ENCODE measurements at regions of chr22 and their contacts with region 1.

Region 1: DNA sequence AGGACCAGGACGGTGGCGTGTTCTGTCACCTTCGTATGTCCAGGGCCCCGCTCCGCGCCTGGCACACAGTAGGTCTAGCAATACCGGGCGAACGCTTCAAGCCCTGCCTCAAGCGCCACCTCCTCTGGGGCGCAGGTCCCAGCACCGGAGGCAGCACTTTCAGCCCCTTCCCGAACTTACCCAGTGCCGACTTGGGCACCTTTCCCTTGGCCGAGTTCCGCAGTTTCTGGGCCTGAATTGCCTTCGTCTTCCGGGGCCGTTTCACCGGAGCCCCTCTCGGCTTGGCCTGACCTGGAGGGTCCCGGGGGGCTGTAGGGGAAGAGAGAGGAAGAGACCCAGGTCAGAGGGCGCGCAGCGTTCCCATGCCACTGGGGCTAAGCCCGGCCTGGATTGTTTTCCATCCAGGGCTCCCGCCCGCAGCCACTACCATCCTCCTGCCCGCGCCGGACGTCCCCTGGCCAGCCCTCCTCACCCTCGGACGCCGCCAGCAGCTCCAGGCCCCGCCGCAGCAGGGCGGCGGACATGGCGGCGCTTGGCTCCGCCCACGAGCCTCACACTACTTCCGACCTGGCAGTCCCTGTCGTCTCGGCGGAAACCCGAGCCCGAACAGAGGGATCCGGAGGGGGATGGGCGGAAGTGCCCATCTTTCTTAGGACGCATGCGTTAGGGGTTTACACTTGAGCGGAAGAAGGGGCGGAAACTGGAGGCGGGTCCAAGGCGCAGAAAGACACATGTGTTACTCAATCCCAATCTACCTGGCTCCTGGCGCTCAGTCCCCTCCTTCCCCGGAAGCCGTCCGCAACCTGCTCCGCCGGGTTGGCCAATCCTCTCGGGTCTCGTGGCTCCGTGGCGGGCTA is at the start of gene RPS19BP1:
- DNase-seq: peak; percentile 98 to 100 (median 99)
- ATAC-seq: peak; percentile 85
- H3K4me3 ChIP-seq: peak within 1 kb of the TSS; percentile 73
- H3K4me3 Mint-ChIP-seq: peak within 1 kb of the TSS; percentile 98
- H3K27ac ChIP-seq: peak within 1 kb of the TSS; percentile 74 to 91
- H3K27ac Mint-ChIP-seq: peak within 1 kb of the TSS; percentile 90
- H3K4me1 ChIP-seq: peaks cover 67% of the 10 kb centered on the region
- H3K4me1 Mint-ChIP-seq: peaks cover 64% of the 10 kb centered on the region
- H3K27me3 ChIP-seq: no peaks in the 10 kb centered on the region
- H3K27me3 Mint-ChIP-seq: no peaks in the 10 kb centered on the region
- CTCF ChIP-seq: no peak
- total RNA-seq, gene RPS19BP1: 65.8 to 69.7 TPM

Region 2: DNA sequence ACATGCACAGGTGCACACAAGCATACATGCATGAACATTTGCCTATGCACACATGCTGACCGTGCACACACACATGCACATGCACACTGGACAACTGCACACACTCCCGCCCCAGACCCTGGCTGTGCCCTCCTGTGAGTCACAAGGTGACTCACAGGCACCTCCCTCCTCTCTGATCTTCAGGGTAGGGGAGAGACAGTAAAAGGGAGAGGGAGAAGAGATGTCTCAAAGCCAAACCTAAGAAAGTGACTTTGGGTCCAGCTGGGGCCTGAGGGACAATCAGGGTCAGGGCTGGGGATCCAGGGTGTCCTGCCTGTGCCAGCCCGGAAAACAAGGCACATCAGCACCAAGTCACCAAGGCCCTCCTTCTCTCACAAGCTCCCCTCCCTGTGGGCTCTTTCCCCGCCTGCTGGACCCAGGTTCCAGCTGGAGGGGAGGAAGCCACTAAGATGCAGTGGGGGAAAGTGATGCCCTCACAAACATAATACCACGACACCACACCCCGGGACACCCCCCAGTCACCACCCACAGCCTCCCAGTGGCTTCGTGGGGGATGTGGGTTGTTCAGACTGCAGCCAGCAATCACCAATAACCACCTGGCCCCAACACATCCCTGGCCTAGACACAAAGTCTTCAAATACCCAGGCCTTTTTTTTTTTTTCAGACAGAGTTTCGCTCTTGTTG is 327.0 kb before region 1 on chr22:
- CTCF ChIA-PET with region 1: no interaction called
- POLR2A ChIA-PET with region 1: no interaction called
- intact Hi-C with region 1: no loop called
- DNase-seq: peak in 10 of 14 experiments; percentile 11 to 85 (median 38)
- ATAC-seq: peak; percentile 76
- H3K4me3 ChIP-seq: no peak overlapping the region
- H3K4me3 Mint-ChIP-seq: no peak overlapping the region
- H3K27ac ChIP-seq: no peak overlapping the region
- H3K27ac Mint-ChIP-seq: peak overlapping the region; percentile 73
- H3K4me1 ChIP-seq: peaks cover 26% of the 10 kb centered on the region
- H3K4me1 Mint-ChIP-seq: peaks cover 24% of the 10 kb centered on the region
- H3K27me3 ChIP-seq: no peaks in the 10 kb centered on the region
- H3K27me3 Mint-ChIP-seq: no peaks in the 10 kb centered on the region
- CTCF ChIP-seq: no peak

Region 3: DNA sequence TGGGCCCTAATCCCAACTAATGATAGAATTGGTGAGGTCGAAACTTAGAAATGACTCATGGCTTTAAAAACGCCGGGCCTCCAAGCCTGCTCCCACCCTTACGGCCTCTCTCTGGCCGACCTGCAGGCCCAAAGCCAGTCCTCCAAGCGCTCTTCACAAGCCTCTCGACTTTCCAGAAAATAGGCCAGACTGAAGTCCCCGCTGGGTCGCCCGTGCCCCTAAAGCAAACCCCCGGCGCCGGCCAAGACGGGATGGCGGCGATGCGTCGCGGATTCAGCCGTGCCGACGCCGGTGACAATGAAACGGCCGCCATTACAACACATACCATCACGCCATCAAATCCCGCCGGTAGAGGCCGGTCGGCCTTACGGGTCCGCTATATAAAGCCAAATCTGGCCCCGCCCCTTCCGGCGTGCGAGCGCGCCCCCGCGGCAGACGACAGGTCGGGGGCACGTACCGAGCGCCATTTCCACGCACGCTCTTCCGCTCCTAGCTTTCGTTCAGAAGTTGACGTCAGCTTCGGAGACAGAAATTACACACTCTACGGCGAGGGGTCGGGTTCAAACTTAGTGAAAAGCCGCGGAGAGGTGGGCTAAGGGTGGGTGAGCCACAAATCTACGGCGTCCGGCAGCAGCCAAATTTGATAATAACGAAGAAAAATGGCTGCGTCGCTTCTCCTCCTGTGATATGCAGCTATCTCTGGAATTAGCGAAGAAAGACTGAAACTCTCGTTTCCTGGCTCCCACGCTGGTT is 213.0 kb before region 1 on chr22 and contains the start of gene RPL3:
- CTCF ChIA-PET with region 1: interaction called, 6 read pairs
- POLR2A ChIA-PET with region 1: interaction called, 45 read pairs
- intact Hi-C with region 1: loop called in 1 of 2 experiments (anchors 1 kb)
- DNase-seq: peak; percentile 96 to 99 (median 98)
- ATAC-seq: peak; percentile 76
- H3K4me3 ChIP-seq: peak within 1 kb of the TSS; percentile 90
- H3K4me3 Mint-ChIP-seq: peak within 1 kb of the TSS; percentile 99
- H3K27ac ChIP-seq: peak within 1 kb of the TSS; percentile 88 to 92
- H3K27ac Mint-ChIP-seq: peak within 1 kb of the TSS; percentile 96
- H3K4me1 ChIP-seq: peaks cover 57% of the 10 kb centered on the region
- H3K4me1 Mint-ChIP-seq: peaks cover 41% of the 10 kb centered on the region
- H3K27me3 ChIP-seq: no peaks in the 10 kb centered on the region
- H3K27me3 Mint-ChIP-seq: no peaks in the 10 kb centered on the region
- CTCF ChIP-seq: no peak
- total RNA-seq, gene RPL3: 3,952 to 3,974 TPM

Region 4: GRCh38 chr22:39490135-39490798 is 42.2 kb before region 1 on chr22:
- CTCF ChIA-PET with region 1: interaction called, 22 read pairs
- POLR2A ChIA-PET with region 1: interaction called, 10 read pairs
- intact Hi-C with region 1: loop called (anchors 1 kb)
- DNase-seq: peak; percentile 52 to 91 (median 76)
- ATAC-seq: peak; percentile 100
- H3K4me3 ChIP-seq: no peak overlapping the region
- H3K4me3 Mint-ChIP-seq: no peak overlapping the region
- H3K27ac ChIP-seq: no peak overlapping the region
- H3K27ac Mint-ChIP-seq: no peak overlapping the region
- H3K4me1 ChIP-seq: peaks cover 18% of the 10 kb centered on the region
- H3K4me1 Mint-ChIP-seq: peaks cover 12% of the 10 kb centered on the region
- H3K27me3 ChIP-seq: no peaks in the 10 kb centered on the region
- H3K27me3 Mint-ChIP-seq: no peaks in the 10 kb centered on the region
- CTCF ChIP-seq: no peak

Region 5: GRCh38 chr22:39520054-39520891 is 12.2 kb before region 1 on chr22 and contains the start of gene ATF4:
- CTCF ChIA-PET with region 1: interaction called, 69 read pairs
- POLR2A ChIA-PET with region 1: interaction called, 129 read pairs
- intact Hi-C with region 1: loop called (anchors 1 kb)
- DNase-seq: peak; percentile 93 to 99 (median 94)
- ATAC-seq: peak; percentile 91
- H3K4me3 ChIP-seq: peak within 1 kb of the TSS; percentile 100
- H3K4me3 Mint-ChIP-seq: peak within 1 kb of the TSS; percentile 97
- H3K27ac ChIP-seq: peak within 1 kb of the TSS; percentile 92 to 95
- H3K27ac Mint-ChIP-seq: peak within 1 kb of the TSS; percentile 98
- H3K4me1 ChIP-seq: peaks cover 52% of the 10 kb centered on the region
- H3K4me1 Mint-ChIP-seq: peaks cover 57% of the 10 kb centered on the region
- H3K27me3 ChIP-seq: no peaks in the 10 kb centered on the region
- H3K27me3 Mint-ChIP-seq: peaks cover 5% of the 10 kb centered on the region
- CTCF ChIP-seq: no peak
- total RNA-seq, gene ATF4: 358 to 365 TPM

Region 6: GRCh38 chr22:40024201-40025061 is 492.0 kb after region 1 on chr22:
- CTCF ChIA-PET with region 1: interaction called, 43 read pairs
- POLR2A ChIA-PET with region 1: interaction called, 10 read pairs
- intact Hi-C with region 1: loop called (anchors 1 to 2 kb)
- DNase-seq: peak; percentile 40 to 80 (median 53)
- ATAC-seq: peak; percentile 82
- H3K4me3 ChIP-seq: no peak overlapping the region
- H3K4me3 Mint-ChIP-seq: no peak overlapping the region
- H3K27ac ChIP-seq: no peak overlapping the region
- H3K27ac Mint-ChIP-seq: no peak overlapping the region
- H3K4me1 ChIP-seq: peaks cover 7% of the 10 kb centered on the region
- H3K4me1 Mint-ChIP-seq: peaks cover 4% of the 10 kb centered on the region
- H3K27me3 ChIP-seq: no peaks in the 10 kb centered on the region
- H3K27me3 Mint-ChIP-seq: no peaks in the 10 kb centered on the region
- CTCF ChIP-seq: peak; percentile 93

Region 7: GRCh38 chr22:40636380-40637182 is 1104.1 kb after region 1 on chr22 and contains the start of gene MRTFA:
- CTCF ChIA-PET with region 1: no interaction called
- POLR2A ChIA-PET with region 1: no interaction called
- intact Hi-C with region 1: loop called in 1 of 2 experiments (anchors 5 kb)
- DNase-seq: peak; percentile 97 to 100 (median 99)
- ATAC-seq: peak; percentile 93
- H3K4me3 ChIP-seq: peak within 1 kb of the TSS; percentile 96
- H3K4me3 Mint-ChIP-seq: peak within 1 kb of the TSS; percentile 100
- H3K27ac ChIP-seq: peak within 1 kb of the TSS; percentile 88 to 93
- H3K27ac Mint-ChIP-seq: peak within 1 kb of the TSS; percentile 99
- H3K4me1 ChIP-seq: peaks cover 38% of the 10 kb centered on the region
- H3K4me1 Mint-ChIP-seq: peaks cover 48% of the 10 kb centered on the region
- H3K27me3 ChIP-seq: no peaks in the 10 kb centered on the region
- H3K27me3 Mint-ChIP-seq: no peaks in the 10 kb centered on the region
- CTCF ChIP-seq: no peak
- total RNA-seq, gene MRTFA: 55.3 to 58.9 TPM

Measured in CD4-positive, alpha-beta T cell (primary cell).